A673 (cell line): ENCODE measurements at regions of chr9 and their contacts with region 1.

Region 1: DNA sequence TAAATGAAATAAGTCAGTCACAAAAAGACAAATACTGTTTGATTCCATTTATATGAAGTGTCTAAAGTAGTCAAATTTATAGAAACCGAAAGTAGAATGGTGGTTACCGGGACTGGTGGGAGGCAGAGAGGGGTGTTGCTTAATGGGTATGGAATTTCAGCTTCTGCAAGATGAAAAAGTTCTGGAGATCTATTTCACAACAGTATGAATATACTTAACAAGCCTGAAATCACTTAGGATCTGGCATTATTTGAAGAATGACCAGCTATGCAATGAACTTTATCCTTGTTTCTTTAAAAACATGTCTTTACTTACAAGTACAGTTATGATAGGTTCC is 14.6 kb upstream of the FREM1 start:
- DNase-seq: peak; percentile 52
- H3K4me3 ChIP-seq: peak overlapping the region; percentile 24
- H3K27ac ChIP-seq: peak overlapping the region; percentile 79
- H3K4me1 ChIP-seq: peaks cover 52% of the 10 kb centered on the region
- H3K27me3 ChIP-seq: no peaks in the 10 kb centered on the region
- CTCF ChIP-seq: no peak

Region 2: GRCh38 chr9:14993061-14993800 is 68.4 kb after region 1 on chr9:
- CTCF ChIA-PET with region 1: no interaction called
- POLR2A ChIA-PET with region 1: no interaction called
- intact Hi-C with region 1: loop called (anchors 5 kb)
- DNase-seq: peak; percentile 94
- H3K4me3 ChIP-seq: peak overlapping the region; percentile 56
- H3K27ac ChIP-seq: peak overlapping the region; percentile 96
- H3K4me1 ChIP-seq: no peaks in the 10 kb centered on the region
- H3K27me3 ChIP-seq: no peaks in the 10 kb centered on the region
- CTCF ChIP-seq: no peak